Sigmoid colon (tissue), 7 donors: ENCODE measurements at regions of chr10 and their contacts with region 1.

Region 1: GRCh38 chr10:73167783-73168464 is at the starts of genes ECD and FAM149B1:
- DNase-seq: peak; percentile 97
- H3K4me3 ChIP-seq: peak within 1 kb of the TSS; percentile 84 to 92 (median 88)
- H3K27ac ChIP-seq: peak within 1 kb of the TSS; percentile 96 to 98 (median 97)
- H3K4me1 ChIP-seq: peaks cover 0 to 40% (median 35%) of the 10 kb centered on the region in 4 donors
- H3K27me3 ChIP-seq: no peaks in the 10 kb centered on the region
- CTCF ChIP-seq: peak in 1 of 4 experiments; percentile 9
- EP300 ChIP-seq: peak in 1 of 4 donors; percentile 87
- POLR2A ChIP-seq: peak; percentile 93 to 94
- total RNA-seq, gene ECD: 28.0 to 39.1 (median 29.8) TPM
- total RNA-seq, gene FAM149B1: 12.1 to 22.7 (median 17.2) TPM

Region 2: DNA sequence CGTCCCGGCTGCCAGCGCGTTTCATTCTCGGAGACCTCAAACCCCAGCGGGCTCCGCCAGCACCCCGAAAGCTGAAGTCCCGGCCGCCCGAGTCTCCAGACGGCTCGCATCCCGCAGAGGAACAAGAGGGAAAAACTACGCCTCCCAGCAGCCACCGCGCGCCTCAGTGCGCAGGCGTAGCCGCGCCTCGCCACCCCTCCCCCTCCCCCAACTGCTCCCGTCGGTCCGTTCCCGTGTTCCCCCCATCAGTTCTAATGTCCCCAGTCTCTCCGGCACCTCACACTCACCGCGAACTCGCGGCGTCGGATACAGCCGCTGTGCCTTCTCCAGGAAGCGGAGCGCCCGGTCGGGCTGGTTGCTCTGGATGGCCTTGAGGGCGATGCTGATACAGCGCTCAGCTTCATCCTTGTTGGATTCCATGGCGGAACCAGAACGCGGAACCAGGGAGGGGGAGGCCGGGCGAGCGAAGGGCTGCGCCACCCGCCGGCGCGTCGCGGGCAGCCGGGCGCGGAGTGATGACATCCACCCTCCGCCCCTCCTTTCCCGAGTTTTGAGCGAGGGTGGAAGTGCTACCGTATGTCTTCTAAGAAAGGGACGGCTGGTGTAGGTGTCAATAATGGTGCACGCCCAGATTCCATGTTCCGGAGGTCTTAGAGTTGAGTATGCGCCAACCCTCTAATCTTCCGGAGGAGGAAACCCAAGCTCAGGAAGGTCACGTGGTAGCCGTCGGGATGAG is 813.3 kb before region 1 on chr10 and contains the start of gene DNAJB12:
- intact Hi-C with region 1: loop called (anchors 5 kb)
- DNase-seq: peak; percentile 94
- H3K4me3 ChIP-seq: peak within 1 kb of the TSS; percentile 80 to 90 (median 87)
- H3K27ac ChIP-seq: peak within 1 kb of the TSS; percentile 96 to 98 (median 97)
- H3K4me1 ChIP-seq: peaks cover 0 to 40% (median 32%) of the 10 kb centered on the region in 4 donors
- H3K27me3 ChIP-seq: no peaks in the 10 kb centered on the region
- CTCF ChIP-seq: no peak
- EP300 ChIP-seq: peak in 1 of 4 donors; percentile 24
- POLR2A ChIP-seq: peak; percentile 59 to 62
- total RNA-seq, gene DNAJB12: 22.4 to 38.5 (median 30.0) TPM

Region 3: GRCh38 chr10:73096449-73097304 is 71.2 kb before region 1 on chr10 and contains the start of gene P4HA1:
- intact Hi-C with region 1: loop called (anchors 2 kb)
- DNase-seq: peak; percentile 100
- H3K4me3 ChIP-seq: peak within 1 kb of the TSS; percentile 61 to 88 (median 75)
- H3K27ac ChIP-seq: peak within 1 kb of the TSS; percentile 90 to 95 (median 93)
- H3K4me1 ChIP-seq: peaks cover 0 to 22% (median 18%) of the 10 kb centered on the region in 4 donors
- H3K27me3 ChIP-seq: no peaks in the 10 kb centered on the region
- CTCF ChIP-seq: peak in 3 of 4 experiments; percentile 54 to 73 (median 59)
- EP300 ChIP-seq: peak in 2 of 4 donors; percentile 24 to 65
- POLR2A ChIP-seq: peak; percentile 86 to 94
- total RNA-seq, gene P4HA1: 15.2 to 25.0 (median 20.0) TPM

Region 4: DNA sequence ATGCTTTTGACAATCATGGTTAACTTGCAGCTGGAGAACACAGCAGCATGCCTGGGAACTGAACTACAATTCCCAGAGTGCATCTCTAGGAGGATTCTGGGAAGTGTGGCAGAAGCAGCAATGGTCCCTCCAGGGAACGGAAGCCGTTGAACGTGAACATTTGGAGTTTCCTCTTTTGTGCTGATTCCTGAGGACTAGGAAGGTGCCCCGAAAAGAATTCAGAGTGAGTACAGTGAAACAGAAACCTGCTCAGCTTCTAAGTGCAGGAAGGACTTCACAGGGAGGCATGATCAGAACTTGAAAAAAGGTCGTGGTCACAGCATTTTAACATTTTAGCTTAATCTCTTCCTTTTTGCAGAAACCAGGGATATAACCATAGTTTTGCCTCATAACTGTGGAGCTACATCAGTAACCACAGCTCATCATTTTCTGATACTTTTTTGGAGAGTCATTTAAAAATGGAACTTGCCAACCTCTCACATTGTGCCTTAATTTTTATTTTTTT is 57.5 kb before region 1 on chr10 and contains the start of gene NUDT13:
- intact Hi-C with region 1: loop called (anchors 5 kb)
- DNase-seq: peak; percentile 80
- H3K4me3 ChIP-seq: peak within 1 kb of the TSS; percentile 27 to 57 (median 48)
- H3K27ac ChIP-seq: peak within 1 kb of the TSS; percentile 79 to 90 (median 82)
- H3K4me1 ChIP-seq: no peaks in the 10 kb centered on the region
- H3K27me3 ChIP-seq: no peaks in the 10 kb centered on the region
- CTCF ChIP-seq: no peak
- EP300 ChIP-seq: no peak
- POLR2A ChIP-seq: no peak
- total RNA-seq, gene NUDT13: 2.1 to 5.4 (median 2.9) TPM

Region 5: DNA sequence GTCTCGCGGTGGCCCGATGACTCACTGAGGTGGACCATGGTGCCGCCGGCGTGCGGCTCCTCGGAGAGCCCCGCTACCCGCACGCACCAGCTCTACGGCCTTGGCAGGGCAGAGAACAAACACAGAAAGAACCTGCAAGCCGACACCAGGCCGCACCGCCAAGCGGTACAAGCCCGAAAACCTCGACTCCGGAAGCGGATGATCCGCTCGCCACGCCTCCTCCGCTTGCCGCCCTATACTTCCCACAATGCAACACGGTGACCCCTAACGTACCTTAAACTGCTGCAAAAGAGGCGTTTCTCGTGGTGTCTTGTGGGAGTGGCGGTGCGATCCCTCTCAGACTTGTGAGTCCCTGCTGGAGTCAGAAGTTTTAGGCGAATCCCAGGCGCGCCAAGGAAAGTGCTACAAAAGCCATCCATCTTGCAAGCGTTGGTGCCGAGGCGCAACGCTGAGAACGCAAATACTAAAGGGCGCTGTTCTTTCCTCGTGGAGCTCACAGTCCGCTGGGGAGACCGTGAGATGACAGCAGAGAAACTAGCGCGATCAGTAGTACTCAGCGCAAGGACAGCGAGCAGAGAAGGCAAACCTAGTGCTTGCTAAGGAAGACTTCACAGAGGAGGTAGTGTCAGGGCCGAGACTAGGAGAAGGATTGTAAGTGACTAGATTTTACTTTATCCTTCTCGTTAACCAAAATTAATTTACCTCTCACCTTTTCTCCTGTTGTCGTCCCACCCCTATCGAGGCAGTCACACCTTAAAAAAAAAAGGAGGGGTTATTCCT is 84.7 kb after region 1 on chr10 and contains the start of gene MRPS16:
- intact Hi-C with region 1: loop called (anchors 5 kb)
- DNase-seq: peak; percentile 98
- H3K4me3 ChIP-seq: peak within 1 kb of the TSS; percentile 47 to 84 (median 78)
- H3K27ac ChIP-seq: peak within 1 kb of the TSS; percentile 85 to 93 (median 88)
- H3K4me1 ChIP-seq: peaks cover 0 to 32% (median 26%) of the 10 kb centered on the region in 4 donors
- H3K27me3 ChIP-seq: no peaks in the 10 kb centered on the region
- CTCF ChIP-seq: no peak
- EP300 ChIP-seq: peak in 1 of 4 donors; percentile 69
- POLR2A ChIP-seq: peak; percentile 61 to 64
- total RNA-seq, gene MRPS16: 29.2 to 40.0 (median 33.8) TPM